CD8-positive, alpha-beta T cell (primary cell): ENCODE measurements at regions of chr14 and their contacts with region 1.

Region 1: DNA sequence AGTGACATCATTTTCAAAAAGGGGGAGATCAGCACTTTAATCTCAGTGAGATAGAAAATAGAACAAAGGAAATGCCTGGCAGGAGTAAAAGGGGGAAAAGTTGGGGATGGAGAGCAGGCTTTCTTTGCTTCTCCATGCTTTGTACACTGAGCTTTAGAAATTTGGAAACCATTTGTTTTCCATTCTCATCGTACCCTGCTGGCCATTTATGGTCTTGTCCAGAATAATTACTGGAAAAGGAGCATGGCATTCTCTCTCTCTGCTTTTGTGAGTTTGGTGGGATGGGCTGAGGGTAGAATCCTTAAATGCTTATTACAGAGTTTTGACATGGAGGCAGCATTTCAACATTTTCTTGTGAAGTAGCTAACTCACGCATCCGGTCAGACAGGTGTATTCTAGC is 104.4 kb upstream of the FLRT2 start:
- DNase-seq: no peak
- ATAC-seq: no peak
- H3K4me3 ChIP-seq: no peak overlapping the region
- H3K4me3 Mint-ChIP-seq: no peak overlapping the region
- H3K27ac ChIP-seq: no peak overlapping the region
- H3K27ac Mint-ChIP-seq: no peak overlapping the region
- H3K4me1 ChIP-seq: no peaks in the 10 kb centered on the region
- H3K4me1 Mint-ChIP-seq: no peaks in the 10 kb centered on the region
- H3K27me3 ChIP-seq: no peaks in the 10 kb centered on the region
- H3K27me3 Mint-ChIP-seq: no peaks in the 10 kb centered on the region
- CTCF ChIP-seq: no peak

Region 2: GRCh38 chr14:86050072-86050683 is 624.7 kb after region 1 on chr14:
- CTCF ChIA-PET with region 1: no interaction called
- POLR2A ChIA-PET with region 1: no interaction called
- intact Hi-C with region 1: loop called in 1 of 2 experiments (anchors 5 kb)
- DNase-seq: no peak
- ATAC-seq: no peak
- H3K4me3 ChIP-seq: no peak overlapping the region
- H3K4me3 Mint-ChIP-seq: no peak overlapping the region
- H3K27ac ChIP-seq: no peak overlapping the region
- H3K27ac Mint-ChIP-seq: no peak overlapping the region
- H3K4me1 ChIP-seq: no peaks in the 10 kb centered on the region
- H3K4me1 Mint-ChIP-seq: peaks cover under 1% of the 10 kb centered on the region
- H3K27me3 ChIP-seq: no peaks in the 10 kb centered on the region
- H3K27me3 Mint-ChIP-seq: no peaks in the 10 kb centered on the region
- CTCF ChIP-seq: no peak